ENCODE measurements at regions of chr17 and their contacts with region 1.

Region 1: DNA sequence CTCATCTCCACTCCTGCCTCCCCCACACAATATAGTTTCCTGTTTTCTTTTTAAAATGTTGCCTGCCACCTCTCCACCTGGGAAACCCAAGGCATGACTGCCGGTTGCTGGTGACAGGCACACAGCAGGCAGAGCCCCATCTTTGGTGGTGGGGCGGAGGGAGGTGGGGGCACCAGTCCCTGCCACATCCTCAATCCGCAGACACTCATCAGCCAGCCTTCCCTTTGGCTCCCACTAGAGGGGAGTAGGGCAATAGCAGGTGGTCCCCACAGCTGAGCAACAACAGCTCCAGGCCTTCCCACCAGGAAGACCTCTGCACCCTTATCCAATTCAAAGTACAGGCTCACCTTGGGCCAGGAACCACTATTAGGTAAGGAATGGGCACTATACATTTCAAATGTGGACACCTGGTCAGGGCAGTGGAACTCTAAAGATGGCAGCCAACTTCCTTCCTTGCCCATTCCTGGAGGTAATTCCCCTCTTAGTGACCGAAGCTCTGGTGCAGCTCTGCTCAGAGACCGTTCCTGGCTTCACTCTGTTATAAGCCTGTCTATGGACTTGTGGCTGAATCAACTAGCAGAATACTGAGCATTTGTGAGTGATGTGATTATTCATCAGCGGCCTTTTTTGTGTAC is 13.9 kb downstream of the RECQL5 start:
- H3K4me3 ChIP-seq: no peak overlapping the region
- H3K27ac ChIP-seq: no peak overlapping the region
- H3K4me1 ChIP-seq: no peaks in the 10 kb centered on the region
- CTCF ChIP-seq: peak; percentile 71

Region 2: DNA sequence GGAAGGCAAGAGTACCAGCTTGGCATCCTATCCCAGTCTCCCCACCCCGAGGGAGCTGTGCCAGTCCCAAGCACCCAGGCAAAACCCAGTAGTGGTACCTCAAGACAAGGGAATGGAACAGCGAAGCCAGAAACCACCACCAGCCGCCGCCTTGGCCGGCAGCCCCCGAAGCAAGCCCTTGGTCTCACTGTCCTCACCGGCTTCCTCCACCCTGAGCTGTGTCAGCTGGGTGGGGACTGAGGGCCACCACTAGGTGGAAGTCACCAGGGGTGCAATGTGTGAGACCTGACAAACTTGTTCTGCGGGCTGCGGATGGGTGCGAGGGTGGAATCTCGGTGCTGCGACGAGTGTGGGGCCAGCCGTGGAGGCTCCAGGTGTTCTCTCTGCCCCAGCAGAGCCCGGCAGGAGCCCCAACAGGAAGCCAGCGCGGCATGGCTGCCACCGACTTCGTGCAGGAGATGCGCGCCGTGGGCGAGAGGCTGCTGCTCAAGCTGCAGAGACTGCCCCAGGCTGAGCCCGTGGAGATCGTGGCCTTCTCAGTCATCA is 13.2 kb before region 1 on chr17:
- CTCF ChIA-PET with region 1: interaction called, 410 read pairs
- POLR2A ChIA-PET with region 1: interaction called, 4 read pairs
- H3K4me3 ChIP-seq: no peak overlapping the region
- H3K27ac ChIP-seq: no peak overlapping the region
- H3K4me1 ChIP-seq: no peaks in the 10 kb centered on the region
- CTCF ChIP-seq: no peak